Activated CD4-positive, alpha-beta T cell treated with anti-CD3 and anti-CD28 coated beads, Interleukin-2, amount 10 ng/mL, durations not matched to agents 24 days and 14 days (primary cell): ENCODE measurements at regions of chr11 and their contacts with region 1.

Region 1: DNA sequence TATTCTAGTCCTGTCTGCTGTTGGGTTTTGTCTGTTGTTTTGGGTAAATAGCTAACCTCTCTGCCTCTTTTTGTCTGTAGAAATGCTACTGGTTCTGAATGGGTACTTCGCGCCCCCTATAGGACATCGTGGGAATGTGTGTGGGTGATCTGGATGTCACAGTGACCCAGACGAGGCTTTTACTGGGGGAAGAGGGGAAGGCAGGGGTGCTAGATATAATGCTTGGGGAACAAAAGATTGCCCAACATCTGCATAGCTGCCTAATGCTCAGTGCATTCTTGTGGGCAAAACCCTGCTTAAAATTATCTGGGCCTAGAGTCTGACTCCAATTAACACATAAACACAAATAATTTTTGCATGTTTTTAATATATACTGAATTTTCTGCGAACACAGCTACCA is 57.7 kb downstream of the BMAL1 start:
- DNase-seq: peak; percentile 91
- H3K4me3 Mint-ChIP-seq: no peak overlapping the region
- H3K27ac Mint-ChIP-seq: no peak overlapping the region
- H3K4me1 Mint-ChIP-seq: peaks cover 53% of the 10 kb centered on the region
- H3K27me3 Mint-ChIP-seq: no peaks in the 10 kb centered on the region

Region 2: DNA sequence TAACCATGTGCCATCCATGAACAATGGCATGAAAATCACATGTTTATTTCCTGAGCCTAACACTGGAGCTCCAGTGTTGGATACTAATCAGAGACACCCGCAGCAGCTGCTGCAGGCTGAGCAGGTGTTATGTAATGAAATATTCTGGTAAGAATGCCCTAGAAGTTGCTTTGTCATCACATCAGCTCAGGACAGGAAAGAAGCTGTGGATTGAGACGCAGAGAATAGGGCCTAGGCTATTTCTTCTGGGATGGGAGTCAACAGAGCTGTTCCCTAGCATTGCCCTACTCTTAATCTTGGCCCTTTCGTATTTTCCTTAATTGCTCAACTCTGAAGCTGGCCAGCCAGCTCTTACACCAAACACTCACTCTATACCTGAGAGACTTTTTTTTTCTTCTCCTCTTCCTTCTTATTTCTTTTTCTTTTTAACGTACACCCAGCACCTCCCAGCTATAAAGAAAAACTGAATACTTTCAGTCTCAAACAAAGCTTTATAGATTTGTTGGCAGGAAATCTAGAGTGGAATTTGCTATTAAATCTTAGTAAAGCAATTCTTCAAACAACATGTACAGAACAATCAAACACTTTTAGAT is 294.3 kb before region 1 on chr11:
- intact Hi-C with region 1: no loop called
- DNase-seq: no peak
- H3K4me3 Mint-ChIP-seq: no peak overlapping the region
- H3K27ac Mint-ChIP-seq: no peak overlapping the region
- H3K4me1 Mint-ChIP-seq: no peaks in the 10 kb centered on the region
- H3K27me3 Mint-ChIP-seq: peaks cover 9% of the 10 kb centered on the region

Region 3: GRCh38 chr11:13289081-13289480 is 46.2 kb before region 1 on chr11:
- intact Hi-C with region 1: loop called (anchors 1 kb)
- DNase-seq: no peak
- H3K4me3 Mint-ChIP-seq: no peak overlapping the region
- H3K27ac Mint-ChIP-seq: peak overlapping the region; percentile 91
- H3K4me1 Mint-ChIP-seq: peaks cover 58% of the 10 kb centered on the region
- H3K27me3 Mint-ChIP-seq: no peaks in the 10 kb centered on the region

Region 4: GRCh38 chr11:13316528-13316961 is 18.8 kb before region 1 on chr11:
- intact Hi-C with region 1: loop called (anchors 2 kb)
- DNase-seq: no peak
- H3K4me3 Mint-ChIP-seq: no peak overlapping the region
- H3K27ac Mint-ChIP-seq: peak overlapping the region; percentile 3
- H3K4me1 Mint-ChIP-seq: peaks cover 43% of the 10 kb centered on the region
- H3K27me3 Mint-ChIP-seq: no peaks in the 10 kb centered on the region

Region 5: GRCh38 chr11:13668102-13668956 is 333.0 kb after region 1 on chr11 and contains the start of gene FAR1:
- intact Hi-C with region 1: loop called (anchors 2 kb)
- DNase-seq: peak; percentile 99
- H3K4me3 Mint-ChIP-seq: peak within 1 kb of the TSS; percentile 98
- H3K27ac Mint-ChIP-seq: peak within 1 kb of the TSS; percentile 97
- H3K4me1 Mint-ChIP-seq: peaks cover 36% of the 10 kb centered on the region
- H3K27me3 Mint-ChIP-seq: peaks cover 10% of the 10 kb centered on the region
- total RNA-seq, gene FAR1: 55.7 and 58.2 TPM in 2 replicates